Tibial artery (tissue), 4 donors: ENCODE measurements at regions of chr4 and their contacts with region 1.

Region 1: GRCh38 chr4:337143-337931 is at the start of gene ZNF141:
- DNase-seq: peak; percentile 97 to 99
- H3K4me3 ChIP-seq: peak within 1 kb of the TSS; percentile 87 to 89
- H3K27ac ChIP-seq: peak within 1 kb of the TSS; percentile 84 to 94
- H3K4me1 ChIP-seq: peaks cover 0 to 25% (median 8%) of the 10 kb centered on the region in 4 donors
- H3K27me3 ChIP-seq: no peaks in the 10 kb centered on the region
- CTCF ChIP-seq: no peak

Region 2: GRCh38 chr4:242121-242848 is 95.1 kb before region 1 on chr4:
- intact Hi-C with region 1: loop called (anchors 10 kb)
- DNase-seq: peak; percentile 24 to 74
- H3K4me3 ChIP-seq: peak overlapping the region; percentile 49 to 51
- H3K27ac ChIP-seq: peak overlapping the region in 1 of 2 donors; percentile 58
- H3K4me1 ChIP-seq: peaks cover 0 to 7% (median 0%) of the 10 kb centered on the region in 4 donors
- H3K27me3 ChIP-seq: no peaks in the 10 kb centered on the region
- CTCF ChIP-seq: peak; percentile 71 to 78

Region 3: DNA sequence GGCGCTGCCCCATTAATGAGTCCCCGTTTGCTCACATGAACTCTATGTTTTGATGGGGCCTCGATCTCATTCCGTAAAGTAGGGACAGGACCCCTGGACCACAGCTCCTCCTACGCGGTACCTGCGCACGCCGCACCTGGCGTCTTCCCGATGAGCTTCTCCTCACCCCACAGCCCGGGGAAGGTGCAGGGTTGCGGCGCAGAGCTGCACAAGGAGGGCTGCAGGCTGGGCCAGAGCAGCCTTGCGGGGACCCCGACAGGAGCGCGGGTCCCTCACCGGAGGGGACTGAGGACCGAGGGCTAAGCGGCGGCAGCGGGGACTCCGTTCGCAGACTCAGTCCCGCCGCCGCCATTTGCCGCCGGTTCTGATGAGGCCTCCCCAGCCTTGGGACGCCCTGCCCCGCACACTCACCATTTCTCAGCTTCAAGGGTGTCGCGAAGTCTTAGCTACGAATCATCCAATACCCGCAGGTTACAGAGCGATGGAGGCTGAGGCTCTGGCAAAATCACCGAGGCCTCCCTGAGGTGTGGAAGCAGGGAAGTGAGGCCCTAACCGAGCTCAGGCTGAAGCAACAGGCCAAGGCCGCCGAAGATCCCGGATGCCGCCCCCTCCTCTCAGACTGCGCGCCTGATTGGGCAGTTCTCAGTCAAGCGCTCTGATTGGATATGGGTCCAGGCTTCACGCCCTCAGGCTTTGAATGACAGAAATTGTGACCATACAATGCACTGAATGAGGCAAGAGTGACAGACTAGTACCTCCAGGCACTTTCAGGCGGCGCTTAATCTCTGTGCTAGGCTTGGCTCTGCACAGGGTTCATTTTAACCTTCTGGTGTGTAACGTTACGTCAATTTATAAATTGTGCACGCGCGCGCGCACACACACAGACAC is 136.5 kb after region 1 on chr4:
- intact Hi-C with region 1: loop called (anchors 10 kb)
- DNase-seq: peak; percentile 95 to 98
- H3K4me3 ChIP-seq: peak overlapping the region; percentile 96 to 98
- H3K27ac ChIP-seq: peak overlapping the region; percentile 85 to 94
- H3K4me1 ChIP-seq: peaks cover 0 to 13% (median 6%) of the 10 kb centered on the region in 4 donors
- H3K27me3 ChIP-seq: no peaks in the 10 kb centered on the region
- CTCF ChIP-seq: no peak

Region 4: DNA sequence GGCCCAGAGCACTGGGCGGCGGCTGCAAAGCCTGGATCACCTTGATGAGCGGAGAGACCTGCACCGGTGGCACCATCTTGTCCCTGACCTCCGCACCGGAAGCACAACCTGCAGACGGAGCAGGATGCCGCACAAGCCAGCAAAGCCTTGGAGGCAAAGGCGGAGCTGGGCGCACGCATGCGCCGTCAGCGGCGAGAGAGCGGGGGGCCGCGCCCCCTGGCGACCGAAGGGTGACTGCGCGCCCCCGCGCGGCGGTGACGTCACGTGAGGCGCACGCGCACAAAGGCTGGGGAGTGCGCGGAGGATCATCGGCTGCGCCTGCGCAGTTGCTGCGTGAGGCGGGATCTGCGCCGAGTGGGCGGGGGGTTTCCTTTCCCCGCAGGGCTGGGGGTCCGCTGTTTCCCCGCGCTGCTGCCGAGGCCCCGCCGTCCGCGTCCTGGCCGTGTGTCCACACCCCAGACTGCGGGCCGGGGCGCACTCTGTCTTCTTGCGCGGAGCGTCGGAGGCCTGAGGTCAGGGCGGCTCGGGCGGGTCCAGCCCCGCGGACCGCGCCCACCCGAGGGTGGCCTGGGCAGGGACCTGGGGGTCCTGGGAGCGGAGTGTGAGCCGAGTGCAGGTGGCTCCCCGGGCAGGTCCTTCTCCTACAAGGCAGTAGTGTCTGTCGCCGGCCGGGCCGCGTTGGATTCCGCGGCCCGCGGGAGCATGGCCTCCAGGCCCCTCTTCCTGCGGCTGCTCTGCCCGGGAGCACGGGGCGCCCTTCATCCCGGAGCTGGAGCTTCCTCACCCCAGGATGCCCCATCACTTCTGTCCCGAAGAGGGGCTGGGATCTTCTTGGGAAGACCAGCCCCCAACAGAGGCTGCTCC is 337.1 kb after region 1 on chr4 and contains the starts of genes ATP5ME and MYL5:
- intact Hi-C with region 1: loop called (anchors 10 kb)
- DNase-seq: peak; percentile 95 to 98
- H3K4me3 ChIP-seq: peak within 1 kb of the TSS; percentile 94 to 97
- H3K27ac ChIP-seq: peak within 1 kb of the TSS; percentile 96 to 97
- H3K4me1 ChIP-seq: peaks cover 0 to 34% (median 17%) of the 10 kb centered on the region in 4 donors
- H3K27me3 ChIP-seq: peaks cover 0 to 33% of the 10 kb centered on the region in 2 donors
- CTCF ChIP-seq: peak; percentile 87 to 89

Region 5: DNA sequence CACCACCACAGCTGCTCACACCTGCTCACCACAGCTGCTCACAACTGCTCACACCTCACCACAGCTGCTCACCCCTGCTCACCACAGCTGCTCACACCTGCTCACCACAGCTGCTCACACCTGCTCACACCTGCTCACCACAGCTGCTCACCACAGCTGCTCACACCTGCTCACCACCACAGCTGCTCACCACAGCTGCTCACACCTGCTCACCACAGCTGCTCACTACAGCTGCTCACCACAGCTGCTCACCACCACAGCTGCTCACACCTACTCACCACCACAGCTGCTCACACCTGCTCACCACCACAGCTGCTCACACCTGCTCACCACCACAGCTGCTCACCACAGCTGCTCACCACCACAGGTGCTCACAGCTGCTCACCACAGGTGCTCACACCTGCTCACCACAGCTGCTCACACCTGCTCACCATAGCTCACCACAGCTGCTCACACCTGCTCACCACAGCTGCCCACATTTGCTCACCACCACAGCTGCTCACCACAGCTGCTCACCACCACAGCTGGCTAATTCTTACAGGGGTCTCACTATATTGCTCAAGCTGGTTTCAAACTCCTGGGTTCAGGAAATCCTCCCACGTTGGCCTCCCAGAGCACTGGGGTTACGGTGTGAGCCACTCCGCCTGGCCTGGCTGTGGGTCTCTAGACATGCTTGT is 519.0 kb after region 1 on chr4:
- intact Hi-C with region 1: no loop called
- DNase-seq: no peak
- H3K4me3 ChIP-seq: no peak overlapping the region
- H3K27ac ChIP-seq: no peak overlapping the region
- H3K4me1 ChIP-seq: no peaks in the 10 kb centered on the region
- H3K27me3 ChIP-seq: no peaks in the 10 kb centered on the region
- CTCF ChIP-seq: no peak

Region 6: GRCh38 chr4:1347410-1347864 is 1010.1 kb after region 1 on chr4:
- intact Hi-C with region 1: no loop called
- DNase-seq: peak; percentile 78 to 91
- H3K4me3 ChIP-seq: peak overlapping the region; percentile 73 to 100
- H3K27ac ChIP-seq: peak overlapping the region; percentile 92 to 97
- H3K4me1 ChIP-seq: peaks cover 0 to 32% (median 23%) of the 10 kb centered on the region in 4 donors
- H3K27me3 ChIP-seq: no peaks in the 10 kb centered on the region
- CTCF ChIP-seq: no peak